ENCODE measurements at regions of chr1 and their contacts with region 1.

Region 1: DNA sequence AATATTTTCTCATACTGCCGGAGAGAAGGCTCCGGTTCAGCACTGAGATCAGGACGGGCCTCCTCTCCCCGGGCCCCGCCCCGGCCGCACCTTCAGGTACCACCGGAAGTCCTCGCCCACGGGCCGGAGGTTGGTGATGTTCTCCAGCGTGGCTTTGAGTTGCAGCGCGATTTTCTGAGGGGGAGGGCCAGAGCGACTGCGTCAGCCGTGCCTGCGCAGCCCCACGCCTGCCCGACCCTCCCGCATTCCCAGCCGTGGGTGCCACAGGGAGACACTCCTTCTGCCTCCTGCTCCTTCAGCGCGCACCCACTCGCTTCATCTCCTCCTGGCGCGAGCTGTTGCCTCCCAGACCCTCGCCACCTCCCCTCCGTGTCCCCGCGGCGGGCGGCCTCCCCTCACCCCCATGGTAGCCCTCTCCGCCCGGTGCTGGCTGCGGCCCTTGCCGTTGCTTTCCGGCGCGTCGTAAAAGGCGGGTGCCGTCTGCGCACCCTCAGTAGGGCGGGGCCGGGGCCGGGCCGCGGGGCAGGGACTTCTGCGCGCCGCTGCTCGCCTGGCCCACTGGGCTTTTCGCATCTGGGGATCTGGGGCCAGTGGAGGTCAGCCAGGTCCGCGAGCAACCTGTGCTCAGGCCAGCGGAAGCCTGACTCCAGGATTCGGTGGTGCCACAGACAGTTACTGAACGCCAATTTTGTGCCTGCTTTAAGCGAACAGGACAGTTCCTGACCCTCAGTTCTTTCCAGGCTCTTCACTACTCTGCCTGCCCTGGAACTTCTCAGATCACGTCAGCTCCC is at the start of gene CZIB:
- DNase-seq: peak; percentile 83 to 91
- ATAC-seq: peak; percentile 97 to 98
- H3K4me3 ChIP-seq: peak within 1 kb of the TSS; percentile 80 to 89 (median 86)
- H3K27ac ChIP-seq: peak within 1 kb of the TSS; percentile 94 to 98 (median 96)
- H3K4me1 ChIP-seq: peaks cover 13 to 15% of the 10 kb centered on the region in 2 donors
- H3K27me3 ChIP-seq: no peaks in the 10 kb centered on the region
- CTCF ChIP-seq: no peak
- POLR2A ChIP-seq: peak; percentile 80 to 85
- total RNA-seq, gene CZIB: 38.3 to 51.4 (median 44.9) TPM

Region 2: GRCh38 chr1:53238197-53239155 is 18.1 kb after region 1 on chr1 and contains the start of gene MAGOH:
- in situ Hi-C with region 1: no loop called
- intact Hi-C with region 1: loop called (anchors 1 kb)
- DNase-seq: peak; percentile 80 to 88
- ATAC-seq: peak; percentile 94 to 95
- H3K4me3 ChIP-seq: peak within 1 kb of the TSS; percentile 66 to 98 (median 84)
- H3K27ac ChIP-seq: peak within 1 kb of the TSS; percentile 77 to 82 (median 81)
- H3K4me1 ChIP-seq: peaks cover 19 to 21% of the 10 kb centered on the region in 2 donors
- H3K27me3 ChIP-seq: no peaks in the 10 kb centered on the region
- CTCF ChIP-seq: peak in 1 of 5 experiments; percentile 16
- POLR2A ChIP-seq: peak; percentile 57 to 69
- total RNA-seq, gene MAGOH: 12.9 to 34.3 (median 19.8) TPM

Region 3: DNA sequence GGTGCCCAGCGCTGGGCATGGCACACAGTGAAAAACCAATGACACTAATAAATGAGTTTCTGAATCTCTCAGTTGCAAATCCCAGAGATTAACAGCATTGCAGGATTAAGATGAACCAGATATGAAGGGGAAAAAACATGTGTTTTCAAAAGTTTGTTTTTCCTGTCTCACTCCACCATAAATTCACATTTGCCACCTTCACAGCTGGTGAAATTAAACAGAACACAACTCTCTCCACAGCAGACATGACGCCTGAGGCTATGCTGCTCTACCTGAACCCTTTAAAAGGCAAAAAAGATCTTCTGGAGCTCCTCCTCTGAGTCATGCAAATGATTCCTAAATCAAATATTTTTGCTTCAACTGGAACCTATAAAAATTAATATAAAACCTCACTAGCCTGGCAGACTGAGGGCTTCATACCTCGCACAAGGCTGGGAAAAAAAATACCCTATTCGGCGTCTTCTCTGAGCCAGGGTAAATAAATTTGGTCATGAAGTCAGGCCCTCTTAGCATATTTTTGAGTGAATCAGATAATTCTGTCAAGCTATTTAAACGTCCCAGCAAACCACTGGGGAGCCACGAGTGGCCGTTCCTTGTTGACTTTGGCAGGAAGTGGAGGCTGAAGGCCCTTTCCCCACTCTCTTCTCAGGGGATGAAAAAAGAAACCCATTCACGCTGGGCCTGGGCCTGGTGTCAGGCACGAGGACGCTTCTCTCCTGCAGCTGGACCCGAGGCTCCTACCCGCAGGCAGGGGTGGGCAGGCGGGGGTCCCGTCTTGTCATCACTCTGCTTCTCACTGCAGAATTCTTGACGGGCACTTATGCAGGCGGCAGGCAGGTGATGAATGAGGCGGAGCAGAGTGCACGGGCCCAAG is 291.8 kb after region 1 on chr1:
- in situ Hi-C with region 1: no loop called
- intact Hi-C with region 1: no loop called
- DNase-seq: no peak
- ATAC-seq: no peak
- H3K4me3 ChIP-seq: no peak overlapping the region
- H3K27ac ChIP-seq: no peak overlapping the region
- H3K4me1 ChIP-seq: no peaks in the 10 kb centered on the region
- H3K27me3 ChIP-seq: no peaks in the 10 kb centered on the region
- CTCF ChIP-seq: no peak
- POLR2A ChIP-seq: no peak

Region 4: DNA sequence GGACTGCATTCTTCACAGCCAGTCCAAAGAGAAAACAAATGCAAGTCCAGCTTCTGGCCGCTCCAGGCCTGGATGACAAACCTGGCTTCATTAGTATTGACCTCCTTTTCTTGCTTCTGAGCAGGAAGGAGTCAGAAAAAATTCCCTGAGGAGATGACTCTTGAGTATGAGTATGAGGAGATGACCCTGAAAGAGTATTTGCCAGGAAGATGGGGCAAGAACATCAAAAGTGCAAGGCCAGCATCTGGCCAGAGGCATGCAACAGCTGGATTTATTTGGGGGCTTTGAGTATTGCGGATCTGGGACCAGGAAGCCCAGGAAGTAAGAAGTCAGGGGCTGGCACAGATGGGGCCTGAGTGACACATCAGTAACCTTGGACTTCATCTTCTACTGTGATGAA is 404.7 kb after region 1 on chr1:
- in situ Hi-C with region 1: no loop called
- intact Hi-C with region 1: no loop called
- DNase-seq: peak in 1 of 2 donors; percentile 24
- ATAC-seq: peak; percentile 42 to 49
- H3K4me3 ChIP-seq: no peak overlapping the region
- H3K27ac ChIP-seq: no peak overlapping the region
- H3K4me1 ChIP-seq: no peaks in the 10 kb centered on the region
- H3K27me3 ChIP-seq: no peaks in the 10 kb centered on the region
- CTCF ChIP-seq: no peak
- POLR2A ChIP-seq: no peak